Mammary epithelial cell (primary cell): ENCODE measurements at regions of chr10 and their contacts with region 1.

Region 1: DNA sequence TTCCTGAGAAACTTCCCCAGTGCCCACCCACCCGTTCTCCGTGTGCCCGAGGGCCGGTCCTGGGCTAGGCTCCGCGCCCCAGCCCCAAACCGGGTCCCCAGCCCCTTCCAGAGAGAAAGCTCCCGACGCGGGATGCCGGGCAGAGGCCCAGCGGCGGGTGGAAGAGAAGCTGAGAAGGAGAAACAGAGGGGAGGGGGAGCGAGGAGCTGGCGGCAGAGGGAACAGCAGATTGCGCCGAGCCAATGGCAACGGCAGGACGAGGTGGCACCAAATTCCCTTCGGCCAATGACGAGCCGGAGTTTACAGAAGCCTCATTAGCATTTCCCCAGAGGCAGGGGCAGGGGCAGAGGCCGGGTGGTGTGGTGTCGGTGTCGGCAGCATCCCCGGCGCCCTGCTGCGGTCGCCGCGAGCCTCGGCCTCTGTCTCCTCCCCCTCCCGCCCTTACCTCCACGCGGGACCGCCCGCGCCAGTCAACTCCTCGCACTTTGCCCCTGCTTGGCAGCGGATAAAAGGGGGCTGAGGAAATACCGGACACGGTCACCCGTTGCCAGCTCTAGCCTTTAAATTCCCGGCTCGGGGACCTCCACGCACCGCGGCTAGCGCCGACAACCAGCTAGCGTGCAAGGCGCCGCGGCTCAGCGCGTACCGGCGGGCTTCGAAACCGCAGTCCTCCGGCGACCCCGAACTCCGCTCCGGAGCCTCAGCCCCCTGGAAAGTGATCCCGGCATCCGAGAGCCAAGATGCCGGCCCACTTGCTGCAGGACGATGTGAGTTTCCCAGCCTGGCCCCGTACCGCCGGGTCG is at the start of gene SCD:
- DNase-seq: peak; percentile 95
- H3K4me3 ChIP-seq: peak within 1 kb of the TSS; percentile 83 to 96 (median 94)
- H3K27ac ChIP-seq: peak within 1 kb of the TSS; percentile 71
- H3K4me1 ChIP-seq: peaks cover 43% of the 10 kb centered on the region
- H3K27me3 ChIP-seq: no peaks in the 10 kb centered on the region
- CTCF ChIP-seq: no peak
- total RNA-seq, gene SCD: 348 to 939 TPM

Region 2: DNA sequence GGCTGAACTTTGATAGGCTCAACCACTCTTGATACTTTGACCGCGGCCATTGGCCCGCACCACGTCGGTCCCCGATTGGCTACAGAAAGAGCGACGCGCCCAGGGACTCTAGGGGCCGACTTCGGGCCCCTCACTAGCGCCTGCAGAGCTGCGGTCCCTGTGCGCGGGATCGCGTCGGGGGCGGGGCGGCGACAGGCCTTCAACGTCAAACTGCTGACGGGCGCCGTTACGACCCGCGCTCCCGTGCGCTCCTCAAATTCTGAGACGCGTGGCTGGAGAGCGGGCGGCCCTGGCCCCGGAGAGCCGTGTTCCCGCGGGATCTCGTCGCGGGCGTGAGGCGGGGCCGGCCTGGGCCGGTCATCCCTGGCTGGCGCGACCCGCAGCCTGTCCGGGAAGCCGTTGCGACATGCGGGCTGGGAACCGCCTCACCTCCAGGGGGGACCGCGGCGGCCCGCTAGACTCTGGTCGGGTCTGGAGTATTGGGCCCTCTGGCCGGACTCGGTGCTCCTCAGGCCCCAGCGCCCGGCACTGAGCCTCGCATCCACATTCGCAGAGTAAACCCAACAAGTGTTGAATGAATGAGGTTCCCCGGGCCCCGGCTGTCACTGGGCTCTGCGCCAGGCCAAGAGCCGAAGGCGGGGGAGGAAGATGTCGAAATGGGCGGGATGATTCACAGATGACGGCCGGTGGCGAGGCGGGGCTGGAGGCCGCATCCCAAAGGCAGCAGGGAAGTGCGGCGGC is 726.1 kb before region 1 on chr10:
- CTCF ChIA-PET with region 1: no interaction called
- dilution Hi-C with region 1: no loop called
- in situ Hi-C with region 1: no loop called
- intact Hi-C with region 1: no loop called
- DNase-seq: peak; percentile 95
- H3K4me3 ChIP-seq: peak overlapping the region; percentile 59 to 76 (median 66)
- H3K27ac ChIP-seq: peak overlapping the region; percentile 96
- H3K4me1 ChIP-seq: peaks cover 22% of the 10 kb centered on the region
- H3K27me3 ChIP-seq: no peaks in the 10 kb centered on the region
- CTCF ChIP-seq: peak in 1 of 2 donors; percentile 11

Region 3: DNA sequence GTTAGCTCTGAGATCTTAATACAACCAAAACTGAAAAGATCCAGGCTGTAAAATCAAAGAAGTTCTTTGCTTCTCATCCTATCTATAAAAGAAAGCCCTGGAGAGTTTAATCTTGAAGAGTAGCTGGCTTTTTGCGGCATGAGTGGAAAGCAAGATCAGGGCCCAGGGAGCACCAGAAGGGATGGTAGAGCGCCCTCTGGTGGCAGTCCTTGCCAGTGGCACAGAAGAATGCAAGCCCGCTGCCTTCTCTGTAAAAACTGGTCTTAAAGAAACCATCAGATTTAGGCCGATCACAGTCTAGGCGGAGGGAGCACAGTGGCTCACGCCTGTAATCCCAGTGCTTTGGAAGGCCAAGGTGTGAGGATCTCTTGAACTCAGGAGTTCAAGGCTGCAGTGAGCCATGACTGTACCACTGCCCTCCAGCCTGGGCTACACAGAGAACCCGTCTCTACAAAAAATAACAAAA is 300.9 kb before region 1 on chr10:
- CTCF ChIA-PET with region 1: no interaction called
- dilution Hi-C with region 1: no loop called
- in situ Hi-C with region 1: no loop called
- intact Hi-C with region 1: no loop called
- DNase-seq: peak; percentile 69
- H3K4me3 ChIP-seq: no peak overlapping the region
- H3K27ac ChIP-seq: no peak overlapping the region
- H3K4me1 ChIP-seq: peaks cover 29% of the 10 kb centered on the region
- H3K27me3 ChIP-seq: no peaks in the 10 kb centered on the region
- CTCF ChIP-seq: peak; percentile 95 to 96

Region 4: DNA sequence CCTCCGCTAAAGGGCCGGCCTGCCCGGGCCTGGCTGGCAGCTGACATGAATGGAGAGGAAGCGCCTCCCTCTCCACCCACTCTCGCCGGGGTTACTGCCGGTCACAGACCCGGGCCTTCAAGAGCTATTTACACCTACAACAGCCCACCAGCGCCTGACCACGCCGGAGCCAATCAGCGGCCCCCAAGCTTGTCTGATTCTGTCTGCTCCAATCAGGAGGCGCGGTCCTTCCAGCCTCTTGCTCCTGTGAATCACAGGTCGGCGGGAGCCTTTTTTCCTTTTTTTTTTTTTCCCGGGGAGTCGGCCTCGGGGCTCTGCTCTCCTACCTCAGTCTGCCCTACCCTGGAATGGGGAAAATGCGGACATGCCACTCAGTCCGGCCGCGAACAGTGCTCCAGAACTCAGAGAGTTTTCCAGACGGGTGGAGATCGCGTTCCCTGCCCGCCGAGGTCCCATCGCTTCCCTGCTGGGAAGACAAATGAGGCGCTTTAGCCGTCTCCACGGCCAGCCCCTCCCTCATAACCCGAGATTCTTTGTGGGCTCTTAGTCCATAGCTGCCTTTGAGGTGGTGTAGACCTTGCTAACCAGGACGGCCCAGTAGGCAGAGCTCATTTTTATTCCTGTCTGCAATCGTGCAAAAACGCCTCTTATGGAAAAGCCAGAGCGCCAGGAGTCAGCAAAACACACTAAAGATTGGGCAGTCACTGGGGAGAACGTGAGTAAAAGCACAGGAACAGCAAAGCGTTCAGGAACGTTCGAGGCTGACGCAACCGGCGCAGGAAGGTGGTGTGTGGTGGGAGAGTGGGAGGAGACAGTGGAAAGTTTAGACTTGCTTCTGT is 26.6 kb after region 1 on chr10:
- CTCF ChIA-PET with region 1: interaction called, 4 read pairs
- dilution Hi-C with region 1: no loop called
- in situ Hi-C with region 1: no loop called
- intact Hi-C with region 1: loop called (anchors 1 kb)
- DNase-seq: peak; percentile 100
- H3K4me3 ChIP-seq: peak overlapping the region; percentile 48 to 63 (median 56)
- H3K27ac ChIP-seq: peak overlapping the region; percentile 99
- H3K4me1 ChIP-seq: peaks cover 56% of the 10 kb centered on the region
- H3K27me3 ChIP-seq: no peaks in the 10 kb centered on the region
- CTCF ChIP-seq: no peak